Ascending aorta (tissue), 2 donors: ENCODE measurements at regions of chr14 and their contacts with region 1.

Region 1: DNA sequence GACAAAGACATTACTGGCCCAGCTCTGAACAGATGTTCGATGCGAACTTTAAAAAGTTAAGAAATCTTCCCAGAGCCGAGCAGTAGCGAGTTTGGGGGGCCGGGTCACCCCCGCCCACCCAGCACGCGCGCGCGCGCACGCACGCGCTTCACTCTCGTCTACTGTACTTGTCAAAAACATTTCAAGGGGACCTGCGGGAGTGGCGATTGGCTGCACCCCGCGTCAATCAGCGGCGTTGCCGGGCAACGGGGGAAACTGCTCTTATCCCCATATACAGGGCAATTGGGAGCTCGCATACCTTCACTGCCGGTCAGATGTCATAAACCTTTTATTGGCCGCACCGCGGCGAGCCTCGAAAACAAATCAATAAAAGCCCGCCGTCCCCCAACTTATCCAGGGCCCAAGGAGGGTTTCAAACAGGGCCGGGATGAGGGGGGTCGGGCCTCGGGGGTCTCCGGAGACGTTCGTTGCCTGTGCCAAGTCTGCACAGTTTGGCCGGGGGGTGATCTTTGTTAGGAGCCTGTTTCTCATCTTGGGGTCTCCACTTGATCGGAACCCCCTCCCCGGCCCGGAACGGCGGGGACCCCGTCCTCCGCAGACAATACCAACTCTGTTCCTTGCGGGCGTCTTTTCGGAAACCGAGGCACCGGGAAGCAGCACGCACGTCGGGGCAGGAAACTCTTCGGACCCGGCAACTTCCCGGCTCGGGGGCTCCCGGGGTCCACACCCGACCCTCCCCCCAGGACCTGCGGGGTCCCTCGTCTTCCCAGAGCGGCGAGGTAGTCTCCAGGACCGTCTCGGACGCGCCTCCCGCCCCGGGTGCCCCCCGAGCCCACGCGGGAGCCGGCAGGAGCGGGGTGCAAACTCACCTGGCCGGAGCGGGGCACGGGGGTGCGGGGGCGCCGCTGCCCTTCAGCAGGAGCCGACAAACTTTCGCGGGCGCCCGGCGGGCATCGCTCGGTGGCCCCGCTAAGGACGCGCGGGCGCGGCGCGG is 734 bp downstream of the FOXN3 start:
- DNase-seq: peak; percentile 98 to 100
- H3K4me3 ChIP-seq: peak overlapping the region; percentile 86 to 91
- H3K27ac ChIP-seq: peak overlapping the region; percentile 96 to 98
- H3K4me1 ChIP-seq: peaks cover 4 to 14% of the 10 kb centered on the region in 2 donors
- H3K27me3 ChIP-seq: no peaks in the 10 kb centered on the region
- CTCF ChIP-seq: peak in 1 of 3 experiments; percentile 3

Region 2: DNA sequence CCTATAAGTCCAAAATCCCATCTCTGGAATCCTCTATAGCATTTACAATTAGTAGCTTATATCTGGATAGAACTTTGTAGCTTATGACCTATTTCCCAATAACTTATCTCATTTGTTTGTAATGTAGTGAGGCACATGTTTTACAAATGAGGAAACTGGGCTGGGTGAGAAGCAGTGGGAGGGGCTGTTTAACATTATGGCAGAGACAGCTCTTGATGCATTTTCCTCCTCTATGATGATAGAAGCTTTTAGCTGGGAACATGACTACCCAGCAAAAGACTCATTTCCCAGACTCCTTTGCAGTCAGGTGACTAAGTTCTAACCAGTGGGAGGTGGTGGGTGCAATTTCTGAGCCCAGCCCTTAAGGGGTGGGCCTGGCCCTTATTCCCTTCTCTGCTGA is 412.1 kb before region 1 on chr14:
- intact Hi-C with region 1: no loop called
- DNase-seq: no peak
- H3K4me3 ChIP-seq: no peak overlapping the region
- H3K27ac ChIP-seq: no peak overlapping the region
- H3K4me1 ChIP-seq: no peaks in the 10 kb centered on the region
- H3K27me3 ChIP-seq: no peaks in the 10 kb centered on the region
- CTCF ChIP-seq: no peak

Region 3: DNA sequence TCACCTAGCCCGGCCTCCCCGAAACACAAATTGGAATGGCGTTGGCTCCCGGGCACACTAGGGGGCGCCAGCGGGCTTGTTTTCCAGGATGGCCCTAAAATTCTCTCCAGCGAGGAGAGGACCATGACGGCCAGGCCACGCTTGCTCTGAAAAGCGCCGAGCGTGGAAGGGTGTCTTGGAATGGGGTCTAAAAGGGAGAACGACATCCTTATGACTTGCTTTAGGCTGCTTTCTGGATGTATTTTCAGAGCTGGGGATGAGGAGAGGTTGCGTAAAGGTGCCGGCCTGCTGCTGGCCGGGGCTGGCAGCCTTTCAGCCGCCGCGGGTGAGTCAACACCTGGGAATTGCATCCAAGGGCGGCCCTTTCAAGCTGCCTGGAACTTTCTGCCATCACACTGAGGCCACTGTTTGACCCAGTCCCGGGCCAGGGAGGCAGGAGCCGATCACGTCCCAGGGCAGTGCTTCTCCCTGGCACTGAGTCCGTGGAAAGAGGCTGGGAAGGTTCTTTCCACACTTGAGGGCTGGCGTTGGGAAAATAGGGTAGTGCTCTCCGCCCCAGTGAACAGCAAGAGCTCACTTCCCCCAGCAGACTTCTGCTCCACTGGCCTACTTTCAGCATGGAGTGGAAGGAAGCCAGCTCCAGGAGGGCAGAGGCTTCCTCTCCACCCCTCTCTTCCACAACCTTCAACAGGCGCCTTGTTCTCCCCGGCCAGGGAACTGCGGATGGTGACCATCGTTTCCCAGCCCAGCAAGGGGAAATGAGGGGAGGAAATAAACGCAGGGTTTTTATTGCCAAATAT is 375.6 kb before region 1 on chr14:
- intact Hi-C with region 1: loop called (anchors 2 kb)
- DNase-seq: peak; percentile 60 to 95
- H3K4me3 ChIP-seq: peak overlapping the region; percentile 40 to 44
- H3K27ac ChIP-seq: peak overlapping the region; percentile 81 to 88
- H3K4me1 ChIP-seq: peaks cover 0 to 11% of the 10 kb centered on the region in 2 donors
- H3K27me3 ChIP-seq: no peaks in the 10 kb centered on the region
- CTCF ChIP-seq: peak; percentile 94 to 99 (median 96)

Region 4: DNA sequence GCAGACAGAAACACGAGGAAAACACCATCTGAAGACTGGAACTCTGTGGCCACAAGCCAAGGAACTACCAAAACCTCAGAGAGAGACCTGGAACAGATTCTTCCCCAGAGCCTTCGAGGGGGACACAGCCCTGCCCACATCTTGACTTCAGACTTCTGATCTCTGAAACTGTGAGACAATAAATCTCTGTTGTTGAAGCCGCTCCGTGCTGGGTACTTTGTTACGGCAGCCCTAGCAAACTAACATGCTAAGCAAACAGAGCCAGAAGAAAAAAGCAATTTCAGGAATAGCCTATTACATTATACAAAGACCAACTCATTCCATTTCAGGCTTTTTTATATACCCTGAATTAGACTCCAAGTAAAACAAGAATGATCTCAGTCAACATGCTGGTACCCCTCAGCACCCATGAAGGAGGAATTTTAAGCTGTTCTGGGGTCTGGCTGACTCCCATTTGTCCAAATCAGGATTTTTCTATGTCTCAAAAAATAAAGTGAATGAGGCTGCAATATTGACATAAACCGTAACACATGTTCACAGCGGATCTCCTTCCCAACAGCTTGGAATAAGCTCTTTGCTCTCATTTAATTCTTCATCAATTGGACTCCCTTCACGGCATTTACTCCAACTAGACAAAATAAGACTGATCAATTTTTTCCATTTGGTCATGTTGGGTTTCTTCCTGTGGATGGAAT is 189.4 kb before region 1 on chr14:
- intact Hi-C with region 1: loop called (anchors 5 kb)
- DNase-seq: no peak
- H3K4me3 ChIP-seq: peak overlapping the region in 1 of 2 donors; percentile 38
- H3K27ac ChIP-seq: peak overlapping the region; percentile 78 to 82
- H3K4me1 ChIP-seq: peaks cover 0 to 34% of the 10 kb centered on the region in 2 donors
- H3K27me3 ChIP-seq: no peaks in the 10 kb centered on the region
- CTCF ChIP-seq: no peak

Region 5: GRCh38 chr14:89303457-89304435 is 112.6 kb before region 1 on chr14:
- intact Hi-C with region 1: loop called (anchors 2 kb)
- DNase-seq: peak; percentile 48 to 89
- H3K4me3 ChIP-seq: peak overlapping the region; percentile 24 to 43
- H3K27ac ChIP-seq: peak overlapping the region; percentile 86 to 91
- H3K4me1 ChIP-seq: peaks cover 13 to 46% of the 10 kb centered on the region in 2 donors
- H3K27me3 ChIP-seq: no peaks in the 10 kb centered on the region
- CTCF ChIP-seq: no peak

Region 6: DNA sequence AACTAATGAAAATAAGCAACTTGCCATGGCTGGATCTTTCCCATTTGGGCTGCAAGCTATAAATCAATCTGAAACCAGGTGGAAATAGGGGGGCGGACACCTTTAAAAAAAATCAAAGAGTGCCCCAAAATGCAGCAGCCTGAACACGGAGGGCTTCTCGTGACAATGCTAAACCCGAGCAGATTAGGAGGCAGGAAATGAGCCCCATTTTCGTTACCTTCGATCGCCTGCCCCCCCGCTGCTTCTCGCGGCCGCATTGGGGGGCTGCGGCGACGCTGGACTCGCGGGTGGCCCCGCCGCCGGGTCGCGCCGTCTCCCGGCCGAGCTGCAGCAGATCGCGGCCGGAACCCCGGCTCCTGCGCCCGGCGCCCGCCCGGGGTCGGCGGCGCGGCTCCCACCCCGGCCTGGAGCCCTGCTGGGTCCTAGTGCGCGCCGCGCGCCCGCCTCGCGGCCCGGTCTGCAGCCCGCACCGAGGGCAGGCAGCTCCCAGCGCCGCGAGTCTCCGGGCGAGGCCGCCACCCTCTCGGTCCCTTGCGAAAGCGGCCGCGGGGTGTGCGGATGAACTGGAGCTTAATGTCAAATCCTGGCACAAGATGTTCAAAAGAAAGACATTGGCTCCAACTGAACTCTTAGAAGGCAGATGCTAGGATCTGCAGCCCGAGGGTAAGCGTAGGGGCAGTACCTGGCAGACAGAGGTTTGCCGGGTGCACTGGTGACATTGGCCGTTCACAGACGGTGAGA is 202.7 kb after region 1 on chr14:
- intact Hi-C with region 1: loop called (anchors 2 kb)
- DNase-seq: peak in 1 of 2 donors; percentile 83
- H3K4me3 ChIP-seq: peak overlapping the region; percentile 87 to 97
- H3K27ac ChIP-seq: peak overlapping the region; percentile 74 to 85
- H3K4me1 ChIP-seq: peaks cover 0 to 14% of the 10 kb centered on the region in 2 donors
- H3K27me3 ChIP-seq: no peaks in the 10 kb centered on the region
- CTCF ChIP-seq: no peak

Region 7: GRCh38 chr14:89848165-89848564 is 431.9 kb after region 1 on chr14:
- intact Hi-C with region 1: loop called (anchors 5 kb)
- DNase-seq: no peak
- H3K4me3 ChIP-seq: no peak overlapping the region
- H3K27ac ChIP-seq: no peak overlapping the region
- H3K4me1 ChIP-seq: peaks cover 0 to 4% of the 10 kb centered on the region in 2 donors
- H3K27me3 ChIP-seq: no peaks in the 10 kb centered on the region
- CTCF ChIP-seq: peak; percentile 58 to 66 (median 61)